ENCODE measurements at regions of chr4 and their contacts with region 1.

Region 1: DNA sequence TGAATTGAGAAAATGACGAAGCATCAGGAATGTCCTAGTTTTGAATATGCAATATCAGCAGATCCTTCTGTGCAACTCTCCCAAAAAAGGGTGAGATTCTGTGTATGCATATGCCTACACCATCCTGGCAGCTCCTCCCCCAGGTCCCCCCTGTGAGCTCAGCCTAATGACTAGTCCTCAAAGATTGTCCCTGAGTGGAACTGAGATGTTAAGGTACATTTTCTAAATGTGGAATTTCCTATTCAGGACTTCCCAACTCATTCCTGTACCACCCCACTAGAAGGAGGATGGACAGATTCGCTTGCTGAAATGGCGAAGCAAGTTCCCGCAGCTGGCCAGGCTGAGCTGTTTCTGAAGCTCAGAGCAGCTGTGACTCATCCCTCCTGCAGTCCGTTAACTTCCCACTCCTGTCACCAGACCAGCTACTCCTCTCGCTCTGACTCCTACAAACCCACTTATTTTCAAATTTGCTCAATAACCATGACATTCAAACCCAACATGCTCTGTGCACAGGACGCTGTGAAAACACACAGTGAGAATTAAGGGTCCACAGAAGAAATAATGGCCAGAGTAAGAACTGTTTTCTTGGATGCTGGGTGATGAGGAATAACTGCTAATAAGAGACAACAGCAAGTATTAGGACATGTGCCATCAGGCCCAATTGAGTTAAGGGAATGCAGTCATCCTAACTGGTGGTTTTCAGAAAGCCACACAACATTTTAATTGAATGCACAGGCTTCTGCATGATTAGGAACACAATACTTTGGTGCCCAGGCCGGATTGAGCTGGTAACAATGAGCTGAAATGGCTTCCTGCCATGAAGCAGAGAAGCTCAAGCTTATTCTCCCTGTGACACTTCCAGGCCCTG is 40.0 kb upstream of the IRF2 start:
- DNase-seq: peak; percentile 57
- ATAC-seq: peak; percentile 86
- H3K4me3 Mint-ChIP-seq: peak overlapping the region; percentile 7
- H3K27ac Mint-ChIP-seq: peak overlapping the region; percentile 71
- H3K4me1 Mint-ChIP-seq: peaks cover 35% of the 10 kb centered on the region
- H3K27me3 Mint-ChIP-seq: no peaks in the 10 kb centered on the region

Region 2: DNA sequence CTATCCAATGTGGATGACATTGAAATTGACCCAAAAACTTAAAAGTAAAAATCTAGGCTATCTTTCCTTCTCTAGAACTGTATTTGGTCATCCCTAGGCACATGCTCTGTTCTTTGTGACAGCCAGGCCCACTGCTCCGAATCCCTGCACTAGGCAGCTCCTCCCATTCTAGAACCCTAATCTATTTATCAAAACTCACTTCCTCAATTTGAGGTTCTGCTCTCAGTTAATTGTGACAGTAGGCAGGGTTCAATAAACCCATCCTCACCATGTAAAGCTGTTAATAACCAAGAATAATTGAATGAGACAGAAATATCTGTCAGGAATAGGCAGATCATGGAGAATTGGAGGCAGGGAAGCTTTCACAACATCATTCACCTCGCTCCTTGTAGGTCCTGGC is 11.9 kb after region 1 on chr4:
- CTCF ChIA-PET with region 1: interaction called, 10 read pairs
- POLR2A ChIA-PET with region 1: interaction called, 71 read pairs
- DNase-seq: no peak
- ATAC-seq: no peak
- H3K4me3 Mint-ChIP-seq: no peak overlapping the region
- H3K27ac Mint-ChIP-seq: no peak overlapping the region
- H3K4me1 Mint-ChIP-seq: peaks cover 21% of the 10 kb centered on the region
- H3K27me3 Mint-ChIP-seq: no peaks in the 10 kb centered on the region

Region 3: DNA sequence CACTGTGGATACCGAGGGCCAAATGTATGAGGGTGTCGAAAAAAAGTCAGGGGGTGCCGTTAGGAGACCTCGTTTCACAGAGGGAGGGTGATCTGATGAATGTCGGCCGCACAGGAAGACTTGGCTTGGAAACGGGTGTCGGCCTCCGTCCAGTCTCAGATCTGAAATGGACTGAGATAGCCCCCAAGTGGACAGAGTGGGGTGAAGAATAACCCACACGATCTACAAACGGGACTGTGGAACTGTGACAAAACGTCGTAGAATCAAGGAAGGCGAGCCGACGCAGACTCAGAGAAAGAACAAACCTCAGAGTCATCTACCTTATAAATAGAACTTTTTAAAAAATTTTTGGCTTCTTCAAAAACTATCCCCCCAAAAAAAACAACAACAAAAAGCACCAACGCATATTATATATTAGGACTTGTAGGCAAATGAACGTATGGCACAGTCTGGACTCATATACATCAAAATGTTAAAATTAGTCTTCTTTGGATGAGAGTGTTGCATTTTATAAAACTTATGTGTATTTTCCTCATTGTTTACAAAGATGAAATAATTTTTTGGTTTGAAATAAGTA is 23.8 kb after region 1 on chr4:
- CTCF ChIA-PET with region 1: interaction called, 36 read pairs
- POLR2A ChIA-PET with region 1: interaction called, 71 read pairs
- DNase-seq: peak; percentile 79
- ATAC-seq: peak; percentile 54
- H3K4me3 Mint-ChIP-seq: peak overlapping the region; percentile 95
- H3K27ac Mint-ChIP-seq: peak overlapping the region; percentile 96
- H3K4me1 Mint-ChIP-seq: peaks cover 39% of the 10 kb centered on the region
- H3K27me3 Mint-ChIP-seq: no peaks in the 10 kb centered on the region

Region 4: GRCh38 chr4:184782731-184783373 is 268.5 kb after region 1 on chr4:
- CTCF ChIA-PET with region 1: no interaction called
- POLR2A ChIA-PET with region 1: no interaction called
- DNase-seq: no peak
- ATAC-seq: peak; percentile 48
- H3K4me3 Mint-ChIP-seq: no peak overlapping the region
- H3K27ac Mint-ChIP-seq: peak overlapping the region; percentile 39
- H3K4me1 Mint-ChIP-seq: peaks cover 15% of the 10 kb centered on the region
- H3K27me3 Mint-ChIP-seq: no peaks in the 10 kb centered on the region